CD4-positive, alpha-beta T cell (primary cell): ENCODE measurements at regions of chr6 and their contacts with region 1.

Region 1: GRCh38 chr6:141677598-141678211 is 455.0 kb upstream of the GJE1 start:
- DNase-seq: peak in 3 of 14 experiments; percentile 17 to 44 (median 35)
- ATAC-seq: no peak
- H3K4me3 ChIP-seq: no peak overlapping the region
- H3K4me3 Mint-ChIP-seq: no peak overlapping the region
- H3K27ac ChIP-seq: no peak overlapping the region
- H3K27ac Mint-ChIP-seq: no peak overlapping the region
- H3K4me1 ChIP-seq: no peaks in the 10 kb centered on the region
- H3K4me1 Mint-ChIP-seq: no peaks in the 10 kb centered on the region
- H3K27me3 ChIP-seq: no peaks in the 10 kb centered on the region
- H3K27me3 Mint-ChIP-seq: no peaks in the 10 kb centered on the region
- CTCF ChIP-seq: peak; percentile 52

Region 2: GRCh38 chr6:141664744-141665143 is 13.0 kb before region 1 on chr6:
- CTCF ChIA-PET with region 1: no interaction called
- POLR2A ChIA-PET with region 1: no interaction called
- intact Hi-C with region 1: no loop called
- DNase-seq: no peak
- ATAC-seq: no peak
- H3K4me3 ChIP-seq: no peak overlapping the region
- H3K4me3 Mint-ChIP-seq: no peak overlapping the region
- H3K27ac ChIP-seq: no peak overlapping the region
- H3K27ac Mint-ChIP-seq: no peak overlapping the region
- H3K4me1 ChIP-seq: no peaks in the 10 kb centered on the region
- H3K4me1 Mint-ChIP-seq: no peaks in the 10 kb centered on the region
- H3K27me3 ChIP-seq: no peaks in the 10 kb centered on the region
- H3K27me3 Mint-ChIP-seq: peaks cover 5% of the 10 kb centered on the region
- CTCF ChIP-seq: no peak

Region 3: GRCh38 chr6:142112451-142113061 is 434.9 kb after region 1 on chr6:
- CTCF ChIA-PET with region 1: no interaction called
- POLR2A ChIA-PET with region 1: no interaction called
- intact Hi-C with region 1: loop called (anchors 2 kb)
- DNase-seq: peak; percentile 33 to 74 (median 56)
- ATAC-seq: no peak
- H3K4me3 ChIP-seq: no peak overlapping the region
- H3K4me3 Mint-ChIP-seq: no peak overlapping the region
- H3K27ac ChIP-seq: no peak overlapping the region
- H3K27ac Mint-ChIP-seq: no peak overlapping the region
- H3K4me1 ChIP-seq: no peaks in the 10 kb centered on the region
- H3K4me1 Mint-ChIP-seq: no peaks in the 10 kb centered on the region
- H3K27me3 ChIP-seq: no peaks in the 10 kb centered on the region
- H3K27me3 Mint-ChIP-seq: peaks cover 8% of the 10 kb centered on the region
- CTCF ChIP-seq: peak; percentile 93